OCI-LY7 (cell line): ENCODE measurements at regions of chr5 and their contacts with region 1.

Region 1: GRCh38 chr5:80093796-80094195 is 58.6 kb downstream of the THBS4 start:
- DNase-seq: no peak
- H3K4me3 ChIP-seq: no peak overlapping the region
- H3K27ac ChIP-seq: no peak overlapping the region
- H3K4me1 ChIP-seq: no peaks in the 10 kb centered on the region
- CTCF ChIP-seq: no peak

Region 2: DNA sequence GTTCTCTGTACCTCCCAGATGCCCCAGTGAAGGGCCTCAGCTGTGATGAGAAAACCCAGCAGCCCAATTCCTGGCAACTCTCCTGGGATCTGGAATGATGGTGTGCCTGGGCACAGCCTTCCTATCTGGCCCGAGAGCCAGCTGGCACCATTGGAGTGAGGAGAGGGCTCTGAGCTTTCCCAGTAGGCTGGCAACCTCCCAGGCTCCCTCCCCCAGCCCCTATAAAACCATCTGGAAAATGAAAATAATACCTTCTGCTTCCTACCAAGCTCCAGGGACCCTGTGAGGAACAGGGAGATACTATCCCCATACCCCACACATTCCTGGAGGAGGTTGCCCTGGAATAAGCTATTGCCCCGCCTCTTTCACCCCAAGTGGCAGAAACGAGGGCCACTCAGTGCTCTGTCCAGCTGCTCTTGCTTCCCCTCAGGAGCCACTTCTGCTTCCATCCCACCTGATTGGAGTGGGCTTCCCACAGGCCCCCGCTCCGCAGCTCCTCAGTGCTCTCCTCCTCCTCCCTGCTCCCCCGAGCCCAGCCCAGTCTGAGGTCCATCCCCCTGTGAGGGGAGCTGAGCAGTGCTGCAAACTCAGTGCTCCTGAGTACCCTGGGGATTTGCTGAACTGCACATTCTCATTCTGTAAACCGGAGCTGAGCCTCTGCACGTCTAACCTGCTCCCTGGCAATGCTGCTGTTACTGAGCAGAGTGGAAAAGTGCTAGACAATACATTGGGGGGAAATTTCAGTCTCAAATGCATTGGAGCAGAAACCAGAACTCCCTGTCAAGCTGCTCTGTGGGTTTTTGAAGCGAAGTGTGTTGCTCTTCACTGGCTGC is 16.1 kb after region 1 on chr5:
- CTCF ChIA-PET with region 1: no interaction called
- POLR2A ChIA-PET with region 1: no interaction called
- intact Hi-C with region 1: no loop called
- DNase-seq: no peak
- H3K4me3 ChIP-seq: no peak overlapping the region
- H3K27ac ChIP-seq: no peak overlapping the region
- H3K4me1 ChIP-seq: no peaks in the 10 kb centered on the region
- CTCF ChIP-seq: no peak

Region 3: DNA sequence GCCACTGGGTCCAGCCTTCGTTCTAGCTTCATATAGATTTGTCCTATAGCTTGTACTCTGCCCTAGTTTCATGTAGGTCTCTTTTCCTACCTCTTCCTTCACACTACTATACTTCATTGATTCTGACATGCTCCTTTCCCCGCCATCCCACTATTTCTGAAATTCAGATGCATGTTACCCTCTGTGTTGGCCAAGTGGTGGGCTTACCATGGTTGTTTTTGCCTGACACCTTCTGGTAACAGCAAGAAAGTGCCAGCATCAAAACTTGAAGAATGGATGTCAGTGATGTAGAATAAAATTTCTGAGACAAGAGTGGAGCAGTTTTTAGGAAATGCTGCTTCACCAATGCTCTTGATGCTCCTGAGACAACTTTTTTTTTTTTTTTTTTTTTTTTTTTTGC is 181.6 kb after region 1 on chr5:
- CTCF ChIA-PET with region 1: interaction called, 6 read pairs
- POLR2A ChIA-PET with region 1: interaction called, 8 read pairs
- intact Hi-C with region 1: loop called (anchors 1 kb)
- DNase-seq: peak; percentile 70
- H3K4me3 ChIP-seq: no peak overlapping the region
- H3K27ac ChIP-seq: no peak overlapping the region
- H3K4me1 ChIP-seq: peaks cover 4% of the 10 kb centered on the region
- CTCF ChIP-seq: peak; percentile 92

Region 4: DNA sequence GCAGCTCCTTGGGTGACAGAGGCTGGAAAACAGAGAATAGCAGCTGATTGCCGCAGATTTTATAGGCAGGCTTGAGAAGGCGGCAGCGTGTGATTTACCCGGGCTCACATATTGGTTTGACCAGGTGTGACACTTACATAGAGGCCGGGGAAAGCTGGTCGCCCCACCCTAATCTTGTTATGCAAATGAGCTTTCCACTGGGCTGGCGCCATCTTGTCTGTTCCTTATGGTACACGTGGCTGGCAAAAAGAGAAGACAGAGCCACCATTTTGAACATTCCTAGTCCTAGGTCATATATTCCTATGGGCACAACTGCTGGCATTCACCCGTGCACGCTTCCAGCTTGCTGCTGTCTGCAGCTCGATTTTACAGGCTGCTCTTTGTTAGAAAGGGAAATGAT is 214.7 kb after region 1 on chr5:
- CTCF ChIA-PET with region 1: interaction called, 8 read pairs
- POLR2A ChIA-PET with region 1: interaction called, 4 read pairs
- intact Hi-C with region 1: loop called (anchors 1 kb)
- DNase-seq: no peak
- H3K4me3 ChIP-seq: no peak overlapping the region
- H3K27ac ChIP-seq: no peak overlapping the region
- H3K4me1 ChIP-seq: no peaks in the 10 kb centered on the region
- CTCF ChIP-seq: no peak

Region 5: GRCh38 chr5:80487829-80488721 is 394.3 kb after region 1 on chr5 and contains the start of gene FAM151B:
- CTCF ChIA-PET with region 1: no interaction called
- POLR2A ChIA-PET with region 1: no interaction called
- intact Hi-C with region 1: loop called (anchors 10 kb)
- DNase-seq: peak; percentile 51
- H3K4me3 ChIP-seq: peak within 1 kb of the TSS; percentile 54
- H3K27ac ChIP-seq: no peak within 1 kb of the TSS
- H3K4me1 ChIP-seq: no peaks in the 10 kb centered on the region
- CTCF ChIP-seq: no peak
- total RNA-seq, gene FAM151B: not detected in 2 replicates

Region 6: DNA sequence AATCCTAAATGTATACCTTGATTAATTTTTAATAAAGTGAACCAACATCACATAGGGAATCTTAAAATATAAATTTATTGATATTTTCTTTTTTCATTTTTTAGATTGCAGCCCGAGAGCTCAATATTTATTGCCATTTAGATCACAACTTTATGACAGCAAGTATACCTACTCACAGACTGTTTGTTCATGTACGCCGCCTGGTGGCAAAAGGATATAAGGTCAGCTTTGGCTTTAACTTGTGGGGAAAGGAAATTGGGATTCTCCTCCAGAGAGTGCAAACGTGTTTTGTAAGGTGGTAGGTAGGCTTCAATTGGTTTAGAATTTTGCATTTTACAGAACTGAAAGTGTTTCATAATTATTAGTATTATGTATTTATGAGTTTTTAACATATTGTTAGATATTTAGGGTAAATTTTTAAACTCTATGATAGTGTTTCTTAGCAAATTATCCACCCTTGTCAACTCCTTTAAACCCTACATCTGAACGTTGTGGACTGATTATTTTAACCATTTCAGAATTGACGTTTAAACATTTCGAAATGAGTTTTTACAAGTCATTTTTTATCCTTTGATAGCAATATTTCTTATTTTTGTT is 578.4 kb after region 1 on chr5:
- CTCF ChIA-PET with region 1: no interaction called
- POLR2A ChIA-PET with region 1: no interaction called
- intact Hi-C with region 1: loop called (anchors 10 kb)
- DNase-seq: peak; percentile 78
- H3K4me3 ChIP-seq: no peak overlapping the region
- H3K27ac ChIP-seq: no peak overlapping the region
- H3K4me1 ChIP-seq: no peaks in the 10 kb centered on the region
- CTCF ChIP-seq: peak; percentile 91